ENCODE measurements at regions of chr1 and their contacts with region 1.

Region 1: GRCh38 chr1:64966158-64966971 is at the start of gene JAK1:
- DNase-seq: peak; percentile 30
- H3K4me3 ChIP-seq: peak within 1 kb of the TSS; percentile 89
- H3K27ac ChIP-seq: peak within 1 kb of the TSS; percentile 87
- H3K27me3 ChIP-seq: no peaks in the 10 kb centered on the region
- CTCF ChIP-seq: no peak
- polyA plus RNA-seq, gene JAK1: 129 and 141 TPM in 2 replicates

Region 2: GRCh38 chr1:64933296-64934070 is 32.9 kb before region 1 on chr1:
- CTCF ChIA-PET with region 1: interaction called, 3 read pairs
- POLR2A ChIA-PET with region 1: interaction called, 24 read pairs
- DNase-seq: peak; percentile 69
- H3K4me3 ChIP-seq: peak overlapping the region; percentile 27
- H3K27ac ChIP-seq: peak overlapping the region; percentile 98
- H3K27me3 ChIP-seq: no peaks in the 10 kb centered on the region
- CTCF ChIP-seq: no peak

Region 3: GRCh38 chr1:65002508-65003315 is 36.3 kb after region 1 on chr1:
- CTCF ChIA-PET with region 1: no interaction called
- POLR2A ChIA-PET with region 1: interaction called, 23 read pairs
- DNase-seq: peak; percentile 32
- H3K4me3 ChIP-seq: peak overlapping the region; percentile 69
- H3K27ac ChIP-seq: peak overlapping the region; percentile 94
- H3K27me3 ChIP-seq: no peaks in the 10 kb centered on the region
- CTCF ChIP-seq: no peak

Region 4: DNA sequence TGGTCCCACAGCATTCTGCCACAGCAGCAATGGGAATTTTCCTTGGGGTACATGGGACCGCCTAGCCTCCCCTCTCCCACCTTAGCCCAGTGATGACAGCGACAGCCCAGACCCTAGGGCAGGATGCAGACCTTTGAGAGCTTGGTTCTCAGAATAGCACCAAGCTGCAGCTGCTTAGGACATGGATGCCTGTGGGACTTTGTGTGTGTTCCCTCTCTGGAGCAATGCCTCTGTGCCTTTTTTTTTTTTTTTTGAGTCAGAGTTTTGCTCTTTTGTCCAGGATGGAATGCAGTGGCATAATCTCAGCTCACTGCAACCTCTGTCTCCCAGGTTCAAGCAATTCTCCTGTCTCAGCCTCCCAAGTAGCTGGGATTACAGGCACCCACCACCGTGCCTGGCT is 137.4 kb after region 1 on chr1:
- CTCF ChIA-PET with region 1: no interaction called
- POLR2A ChIA-PET with region 1: no interaction called
- DNase-seq: no peak
- H3K4me3 ChIP-seq: no peak overlapping the region
- H3K27ac ChIP-seq: no peak overlapping the region
- H3K27me3 ChIP-seq: no peaks in the 10 kb centered on the region
- CTCF ChIP-seq: no peak